Astrocyte of the cerebellum (primary cell): ENCODE measurements at regions of chr22 and their contacts with region 1.

Region 1: DNA sequence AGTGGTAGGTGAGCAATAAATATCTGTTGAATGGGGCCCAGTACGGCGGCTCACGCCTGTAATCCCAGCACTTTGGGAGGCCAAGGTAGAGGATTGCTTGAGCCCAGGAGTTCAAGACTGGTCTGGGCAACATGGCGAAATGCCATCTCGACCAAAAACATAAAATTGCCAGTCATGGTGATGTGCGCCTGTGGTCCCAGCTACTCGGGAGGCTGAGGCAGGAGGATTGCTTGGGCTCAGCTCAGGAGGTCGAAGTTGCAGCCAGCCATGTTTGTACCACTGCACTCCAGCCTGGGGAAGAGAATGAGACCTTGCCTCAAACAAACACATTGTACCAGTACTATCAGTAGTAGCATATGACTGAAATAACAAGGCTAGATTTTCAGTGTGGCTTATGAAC is 4.2 kb downstream of the SGSM3 start:
- DNase-seq: no peak
- H3K4me3 ChIP-seq: no peak overlapping the region
- CTCF ChIP-seq: no peak

Region 2: GRCh38 chr22:40415531-40416266 is 41.1 kb after region 1 on chr22:
- in situ Hi-C with region 1: no loop called
- DNase-seq: no peak
- H3K4me3 ChIP-seq: no peak overlapping the region
- CTCF ChIP-seq: no peak

Region 3: DNA sequence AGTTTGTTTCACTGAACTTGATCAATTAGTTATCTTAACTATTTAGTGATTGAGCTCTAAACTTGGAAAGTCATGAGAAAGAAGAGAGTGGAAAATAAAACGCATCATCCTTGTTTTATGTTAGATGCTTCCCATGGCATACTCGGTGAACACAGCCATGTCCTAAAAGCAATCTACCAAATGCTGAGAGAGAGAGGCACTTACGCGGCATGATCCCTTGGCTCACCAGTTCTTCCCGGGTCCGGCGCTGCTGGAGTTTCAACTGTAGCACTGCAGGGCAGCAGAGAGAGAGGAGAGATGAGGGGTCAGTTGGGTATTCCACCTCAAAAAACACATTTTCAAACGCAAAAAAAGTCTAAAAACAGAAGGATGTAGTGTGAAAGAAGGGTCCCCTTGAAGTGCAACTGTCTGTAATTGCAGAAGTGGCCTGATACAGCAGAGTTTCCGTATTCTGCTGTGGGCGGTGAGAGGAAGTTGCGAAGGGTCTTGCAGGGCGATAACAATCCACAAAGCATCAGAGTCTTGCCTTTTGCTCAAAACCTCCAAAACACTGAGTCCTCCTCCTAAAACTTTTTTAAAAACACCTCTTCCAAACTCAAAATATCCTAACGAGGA is 88.6 kb after region 1 on chr22:
- in situ Hi-C with region 1: no loop called
- DNase-seq: no peak
- H3K4me3 ChIP-seq: no peak overlapping the region
- CTCF ChIP-seq: no peak

Region 4: DNA sequence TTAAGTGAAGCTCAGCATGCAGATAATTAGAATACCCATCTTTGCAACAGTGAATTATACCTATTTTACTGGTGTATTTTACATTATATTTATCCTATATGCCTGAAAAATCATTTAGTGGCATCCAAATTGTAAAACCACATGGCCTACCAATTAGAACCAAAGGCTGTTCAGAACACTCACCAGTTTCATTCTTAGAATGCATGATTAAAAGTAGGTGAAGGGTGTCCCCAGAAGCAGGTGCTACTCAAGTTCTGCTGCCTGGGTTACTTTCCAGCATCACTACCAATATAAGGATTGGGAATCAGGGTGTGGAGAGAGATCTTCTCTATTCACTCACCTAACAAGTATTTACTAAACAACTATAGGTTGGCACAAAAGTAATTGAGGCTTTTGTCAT is 99.1 kb after region 1 on chr22:
- in situ Hi-C with region 1: loop called (anchors 5 kb)
- DNase-seq: no peak
- H3K4me3 ChIP-seq: no peak overlapping the region
- CTCF ChIP-seq: no peak